PC-3 (cell line): ENCODE measurements at regions of chr13 and their contacts with region 1.

Region 1: DNA sequence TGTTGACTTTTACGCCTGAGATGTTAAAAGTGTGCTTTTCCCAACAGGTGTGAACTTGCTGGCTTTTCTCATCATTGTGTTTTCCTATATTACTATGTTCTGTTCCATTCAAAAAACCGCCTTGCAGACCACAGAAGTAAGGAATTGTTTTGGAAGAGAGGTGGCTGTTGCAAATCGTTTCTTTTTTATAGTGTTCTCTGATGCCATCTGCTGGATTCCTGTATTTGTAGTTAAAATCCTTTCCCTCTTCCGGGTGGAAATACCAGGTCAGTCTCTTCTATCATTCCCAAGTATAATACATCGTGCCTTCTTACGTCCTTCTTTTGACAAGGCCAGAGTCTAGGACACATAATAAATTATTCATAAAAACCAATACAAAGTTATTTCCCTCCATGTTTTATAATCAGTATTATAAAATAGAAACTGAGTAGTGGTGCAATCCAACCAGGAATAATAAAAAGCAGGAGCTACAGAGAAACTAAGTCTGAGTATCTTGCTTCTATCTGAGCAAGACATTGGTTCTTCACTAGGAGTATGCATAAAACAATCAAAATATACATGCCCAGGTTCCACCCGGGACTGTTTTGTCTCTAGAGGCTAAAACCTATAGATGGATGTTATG is 57.9 kb downstream of the RXFP2 start:
- DNase-seq: peak; percentile 52
- ATAC-seq: peak; percentile 51
- H3K4me3 ChIP-seq: no peak overlapping the region
- H3K27ac ChIP-seq: no peak overlapping the region
- H3K4me1 ChIP-seq: peaks cover 13% of the 10 kb centered on the region
- H3K27me3 ChIP-seq: peaks cover 18% of the 10 kb centered on the region
- CTCF ChIP-seq: peak; percentile 58

Region 2: DNA sequence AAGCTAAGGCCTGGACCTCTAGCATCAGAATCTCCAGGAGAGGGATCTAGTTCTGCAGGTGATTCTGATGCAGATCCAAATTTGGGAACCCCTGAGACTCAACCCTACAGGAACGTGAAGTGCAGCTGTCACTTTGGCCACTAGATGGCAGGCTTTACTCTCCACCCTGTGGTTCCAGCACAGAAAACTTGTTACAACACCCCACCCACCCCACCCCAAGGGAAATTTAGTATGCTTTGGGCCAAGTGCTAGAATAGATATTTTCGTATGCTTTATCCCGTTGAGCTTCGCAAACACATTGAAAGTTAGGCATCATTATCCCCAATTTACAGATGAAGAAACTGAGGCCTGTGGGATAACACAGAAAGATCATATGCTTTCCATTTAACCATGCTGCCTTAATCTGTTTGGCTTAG is 365.5 kb before region 1 on chr13:
- CTCF ChIA-PET with region 1: no interaction called
- POLR2A ChIA-PET with region 1: no interaction called
- intact Hi-C with region 1: loop called (anchors 1 kb)
- DNase-seq: peak; percentile 58
- ATAC-seq: peak; percentile 65
- H3K4me3 ChIP-seq: no peak overlapping the region
- H3K27ac ChIP-seq: no peak overlapping the region
- H3K4me1 ChIP-seq: no peaks in the 10 kb centered on the region
- H3K27me3 ChIP-seq: peaks cover 32% of the 10 kb centered on the region
- CTCF ChIP-seq: peak; percentile 60

Region 3: DNA sequence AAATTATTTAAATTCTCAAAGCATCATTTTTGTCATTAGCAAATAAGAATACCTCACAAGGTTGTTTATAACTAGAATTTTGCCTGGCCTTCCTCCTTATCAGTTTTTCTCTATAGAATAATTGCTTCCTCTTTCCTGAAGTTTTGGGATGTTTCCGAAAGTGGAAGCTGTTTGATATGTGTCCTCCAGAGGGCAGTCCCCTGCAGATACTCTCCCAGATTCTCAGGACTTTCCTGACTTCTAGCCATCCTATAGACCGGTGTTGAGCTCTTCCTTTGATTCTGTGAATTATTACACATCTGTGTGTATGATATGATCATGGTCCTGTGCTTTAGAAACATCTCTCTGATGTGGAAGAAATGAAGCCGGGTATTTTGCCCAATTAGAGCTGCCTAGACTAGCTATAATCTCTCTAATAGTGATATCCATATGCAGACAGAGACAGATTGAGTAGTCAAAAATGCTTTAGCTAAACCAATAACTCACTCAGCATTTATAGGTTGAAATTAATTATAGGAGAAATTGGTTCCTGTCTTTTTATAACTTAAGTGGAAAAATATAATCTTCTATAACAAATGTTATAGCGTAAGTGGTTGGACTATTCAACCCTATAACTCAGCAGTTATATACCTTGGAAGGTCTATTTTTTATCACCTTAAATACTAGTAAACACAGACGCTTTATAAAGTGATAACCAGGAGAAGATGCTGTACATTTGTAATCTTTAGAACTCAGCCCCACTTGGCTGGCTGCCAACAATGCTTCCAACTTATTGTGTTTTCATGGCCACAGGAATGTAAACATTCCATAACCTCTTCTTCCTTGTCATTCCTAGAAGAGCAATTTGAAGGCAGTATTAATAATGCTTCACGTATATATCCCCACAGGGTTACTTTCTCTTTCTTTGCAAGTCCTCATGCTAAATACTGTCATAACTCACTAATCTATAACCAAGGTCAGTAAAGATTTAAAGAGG is 258.9 kb before region 1 on chr13:
- CTCF ChIA-PET with region 1: interaction called, 3 read pairs
- POLR2A ChIA-PET with region 1: no interaction called
- intact Hi-C with region 1: loop called (anchors 1 kb)
- DNase-seq: peak; percentile 59
- ATAC-seq: no peak
- H3K4me3 ChIP-seq: no peak overlapping the region
- H3K27ac ChIP-seq: no peak overlapping the region
- H3K4me1 ChIP-seq: no peaks in the 10 kb centered on the region
- H3K27me3 ChIP-seq: no peaks in the 10 kb centered on the region; the same call in 1 of the 2 replicates
- CTCF ChIP-seq: peak; percentile 64

Region 4: GRCh38 chr13:31742097-31742734 is 55.0 kb before region 1 on chr13:
- CTCF ChIA-PET with region 1: no interaction called
- POLR2A ChIA-PET with region 1: no interaction called
- intact Hi-C with region 1: loop called (anchors 5 kb)
- DNase-seq: peak; percentile 67
- ATAC-seq: peak; percentile 73
- H3K4me3 ChIP-seq: no peak overlapping the region
- H3K27ac ChIP-seq: no peak overlapping the region
- H3K4me1 ChIP-seq: no peaks in the 10 kb centered on the region
- H3K27me3 ChIP-seq: peaks cover 53% of the 10 kb centered on the region
- CTCF ChIP-seq: peak; percentile 93

Region 5: GRCh38 chr13:31909864-31910551 is 112.7 kb after region 1 on chr13:
- CTCF ChIA-PET with region 1: no interaction called
- POLR2A ChIA-PET with region 1: no interaction called
- intact Hi-C with region 1: no loop called
- DNase-seq: peak; percentile 63
- ATAC-seq: peak; percentile 33; the same call in 1 of the 2 replicates
- H3K4me3 ChIP-seq: no peak overlapping the region
- H3K27ac ChIP-seq: no peak overlapping the region
- H3K4me1 ChIP-seq: peaks cover 11% of the 10 kb centered on the region
- H3K27me3 ChIP-seq: peaks cover 6% of the 10 kb centered on the region; the same call in 1 of the 2 replicates
- CTCF ChIP-seq: peak; percentile 89

Region 6: GRCh38 chr13:32045982-32046785 is 248.9 kb after region 1 on chr13:
- CTCF ChIA-PET with region 1: no interaction called
- POLR2A ChIA-PET with region 1: no interaction called
- intact Hi-C with region 1: no loop called
- DNase-seq: no peak
- ATAC-seq: no peak
- H3K4me3 ChIP-seq: no peak overlapping the region
- H3K27ac ChIP-seq: no peak overlapping the region
- H3K4me1 ChIP-seq: peaks cover 13% of the 10 kb centered on the region
- H3K27me3 ChIP-seq: no peaks in the 10 kb centered on the region
- CTCF ChIP-seq: no peak